Esophagus squamous epithelium (tissue), 5 donors: ENCODE measurements at regions of chr1 and their contacts with region 1.

Region 1: GRCh38 chr1:109773146-109773899 is 9.6 kb upstream of the EPS8L3 start:
- DNase-seq: peak; percentile 18
- H3K4me3 ChIP-seq: no peak overlapping the region
- H3K27ac ChIP-seq: no peak overlapping the region
- H3K4me1 ChIP-seq: peaks cover 6 to 16% (median 9%) of the 10 kb centered on the region in 3 donors
- H3K27me3 ChIP-seq: no peaks in the 10 kb centered on the region
- CTCF ChIP-seq: peak in 5 of 6 experiments; percentile 84 to 97 (median 93)
- POLR2A ChIP-seq: no peak

Region 2: DNA sequence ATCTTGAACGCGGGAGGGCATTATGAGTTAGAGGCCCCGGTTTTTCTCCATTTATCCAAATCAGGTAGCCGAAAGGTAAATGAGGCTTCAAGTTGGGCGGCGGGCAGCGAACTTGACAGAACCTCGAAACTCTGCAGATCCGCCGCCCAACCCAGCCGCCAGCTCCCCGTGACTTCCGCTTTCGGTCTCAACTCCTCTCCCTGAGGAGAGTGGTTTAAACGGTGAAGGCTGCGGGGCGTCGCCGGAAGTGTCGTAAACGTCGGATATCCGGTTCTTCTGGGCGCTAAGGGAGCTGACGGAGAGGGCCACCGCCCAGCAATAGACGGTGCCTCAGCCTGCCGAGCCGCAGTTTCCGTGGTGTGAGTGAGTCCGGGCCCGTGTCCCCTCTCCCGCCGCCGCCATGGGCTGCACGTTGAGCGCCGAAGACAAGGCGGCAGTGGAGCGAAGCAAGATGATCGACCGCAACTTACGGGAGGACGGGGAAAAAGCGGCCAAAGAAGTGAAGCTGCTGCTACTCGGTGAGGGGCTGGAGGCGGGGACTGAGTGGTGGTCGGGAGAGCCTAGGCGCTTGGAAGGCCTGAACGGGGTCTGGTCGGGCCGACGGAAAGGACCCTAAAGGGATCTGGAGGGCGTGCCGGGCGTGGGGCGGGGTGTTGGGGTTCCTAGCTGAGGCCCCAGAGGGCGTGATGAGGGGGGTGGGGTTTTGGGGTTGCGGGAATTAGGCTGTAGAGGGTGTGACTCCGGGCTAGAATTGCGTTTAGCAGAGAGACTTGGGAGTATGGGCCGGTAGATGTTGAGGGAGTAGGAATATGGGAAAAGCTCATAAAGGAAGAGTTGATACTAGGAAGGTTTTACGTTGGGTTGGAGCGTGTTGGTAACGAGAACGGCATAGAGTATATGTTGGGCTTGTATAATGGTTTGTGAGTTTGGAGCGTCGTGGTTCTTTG is 224.7 kb before region 1 on chr1 and contains the start of gene GNAI3:
- intact Hi-C with region 1: loop called (anchors 5 kb)
- DNase-seq: peak; percentile 84
- H3K4me3 ChIP-seq: peak within 1 kb of the TSS; percentile 87 to 96 (median 94)
- H3K27ac ChIP-seq: peak within 1 kb of the TSS; percentile 97 to 99 (median 98)
- H3K4me1 ChIP-seq: peaks cover 7 to 56% (median 22%) of the 10 kb centered on the region in 3 donors
- H3K27me3 ChIP-seq: no peaks in the 10 kb centered on the region
- CTCF ChIP-seq: peak in 2 of 6 experiments; percentile 2 to 28
- POLR2A ChIP-seq: peak in 3 of 4 donors; percentile 96 to 99 (median 99)
- total RNA-seq, gene GNAI3: 8.2 to 15.1 (median 11.6) TPM

Region 3: GRCh38 chr1:109643385-109644230 is 129.7 kb before region 1 on chr1:
- intact Hi-C with region 1: loop called (anchors 5 kb)
- DNase-seq: no peak
- H3K4me3 ChIP-seq: peak overlapping the region in 1 of 4 donors; percentile 29
- H3K27ac ChIP-seq: no peak overlapping the region
- H3K4me1 ChIP-seq: peaks cover 0 to 15% (median 7%) of the 10 kb centered on the region in 3 donors
- H3K27me3 ChIP-seq: no peaks in the 10 kb centered on the region
- CTCF ChIP-seq: peak; percentile 90 to 96 (median 92)
- POLR2A ChIP-seq: no peak

Region 4: GRCh38 chr1:109931189-109931731 is 157.9 kb after region 1 on chr1:
- intact Hi-C with region 1: no loop called
- DNase-seq: no peak
- H3K4me3 ChIP-seq: no peak overlapping the region
- H3K27ac ChIP-seq: peak overlapping the region; percentile 71 to 89 (median 84)
- H3K4me1 ChIP-seq: peaks cover 47 to 82% (median 71%) of the 10 kb centered on the region in 3 donors
- H3K27me3 ChIP-seq: no peaks in the 10 kb centered on the region
- CTCF ChIP-seq: no peak
- POLR2A ChIP-seq: no peak

Region 5: DNA sequence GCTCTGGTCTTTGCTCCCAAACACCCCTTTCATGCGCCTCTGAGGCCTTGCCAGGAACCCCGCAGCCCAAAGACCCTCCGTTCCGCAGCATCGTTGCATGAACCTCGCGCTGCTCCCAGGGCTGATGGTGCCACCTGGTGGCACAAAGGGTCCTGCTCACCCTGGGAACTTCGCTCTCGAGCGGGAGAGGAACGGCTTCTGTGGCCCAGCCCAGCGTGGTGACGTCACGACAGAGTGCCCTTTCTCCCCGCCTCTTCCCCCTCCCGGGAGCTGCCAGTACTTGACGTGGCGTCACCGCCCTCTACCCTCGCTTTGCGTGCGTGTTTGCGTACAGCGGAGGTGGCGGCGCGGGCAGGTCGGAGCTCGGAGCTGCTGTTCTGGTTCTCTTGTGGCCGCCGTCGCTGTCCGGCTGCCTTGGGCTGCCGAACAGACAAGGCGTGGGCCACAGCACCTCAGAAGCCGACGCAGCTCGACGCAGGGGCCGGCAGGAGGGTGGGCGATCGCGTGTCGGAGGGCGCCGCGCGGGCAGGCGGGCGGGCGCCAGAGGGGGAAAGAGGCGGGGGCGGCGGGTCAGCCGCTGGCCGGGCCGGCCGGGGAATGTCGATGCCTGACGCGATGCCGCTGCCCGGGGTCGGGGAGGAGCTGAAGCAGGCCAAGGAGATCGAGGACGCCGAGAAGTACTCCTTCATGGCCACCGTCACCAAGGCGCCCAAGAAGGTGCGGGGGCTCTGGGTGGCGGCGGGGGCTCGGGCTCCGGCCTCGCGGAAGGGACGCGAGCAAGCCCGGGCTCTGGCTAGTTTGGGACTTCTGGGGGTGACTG is 211.3 kb after region 1 on chr1 and contains the start of gene AHCYL1:
- intact Hi-C with region 1: loop called (anchors 2 kb)
- DNase-seq: peak; percentile 98
- H3K4me3 ChIP-seq: peak within 1 kb of the TSS; percentile 70 to 95 (median 78)
- H3K27ac ChIP-seq: peak within 1 kb of the TSS; percentile 92 to 97 (median 95)
- H3K4me1 ChIP-seq: peaks cover 29 to 72% (median 50%) of the 10 kb centered on the region in 3 donors
- H3K27me3 ChIP-seq: no peaks in the 10 kb centered on the region
- CTCF ChIP-seq: peak; percentile 97 to 99 (median 99)
- POLR2A ChIP-seq: peak in 3 of 4 donors; percentile 84 to 98 (median 98)
- total RNA-seq, gene AHCYL1: 49.7 to 60.3 (median 53.0) TPM